Activated T-helper 1 cell treated with anti-CD3 and anti-CD28 coated beads, Interleukin-12 subunit alpha, Interleukin-12 subunit beta, Interleukin-2, Interleukin-4 antibody, amounts not matched to agents 30 ng/mL and 10 ng/mL and 1 ng/mL, durations not matched to agents 14 hours and 24 hours and 36 hours (primary cell): ENCODE measurements at regions of chr13 and their contacts with region 1.

Region 1: GRCh38 chr13:28493740-28494503 is 1.0 kb downstream of the FLT1 start:
- DNase-seq: no peak
- H3K4me3 Mint-ChIP-seq: peak overlapping the region; percentile 85
- H3K27ac Mint-ChIP-seq: no peak overlapping the region
- H3K4me1 Mint-ChIP-seq: peaks cover 49% of the 10 kb centered on the region
- H3K27me3 Mint-ChIP-seq: peaks cover 41% of the 10 kb centered on the region

Region 2: DNA sequence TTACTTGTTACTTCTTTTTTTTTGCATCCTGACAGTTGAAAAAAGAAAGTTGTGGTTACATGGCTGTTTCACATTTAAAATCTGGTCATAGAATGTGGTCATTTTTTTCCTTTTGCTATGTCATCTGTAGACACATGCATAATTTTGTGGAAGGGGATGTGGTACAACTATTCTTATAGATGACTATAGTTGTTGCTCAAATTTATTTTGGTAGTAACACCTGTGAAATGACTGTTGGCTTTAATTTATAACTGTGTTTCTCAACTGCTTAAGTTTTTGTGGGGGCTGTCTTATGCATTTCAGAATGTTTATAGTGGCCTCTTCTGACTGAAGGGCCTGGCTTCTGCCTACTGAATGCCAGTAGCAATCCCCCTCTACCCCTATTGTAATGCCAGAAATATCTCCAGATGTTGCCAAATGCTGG is 225.1 kb before region 1 on chr13:
- intact Hi-C with region 1: loop called (anchors 2 kb)
- DNase-seq: no peak
- H3K4me3 Mint-ChIP-seq: peak overlapping the region; percentile 49
- H3K27ac Mint-ChIP-seq: peak overlapping the region; percentile 70
- H3K4me1 Mint-ChIP-seq: peaks cover 27% of the 10 kb centered on the region
- H3K27me3 Mint-ChIP-seq: no peaks in the 10 kb centered on the region

Region 3: GRCh38 chr13:28394422-28394821 is 99.5 kb before region 1 on chr13:
- intact Hi-C with region 1: no loop called
- DNase-seq: no peak
- H3K4me3 Mint-ChIP-seq: no peak overlapping the region
- H3K27ac Mint-ChIP-seq: no peak overlapping the region
- H3K4me1 Mint-ChIP-seq: peaks cover 11% of the 10 kb centered on the region
- H3K27me3 Mint-ChIP-seq: no peaks in the 10 kb centered on the region

Region 4: GRCh38 chr13:28540612-28541011 is 46.7 kb after region 1 on chr13:
- intact Hi-C with region 1: loop called (anchors 2 kb)
- DNase-seq: no peak
- H3K4me3 Mint-ChIP-seq: no peak overlapping the region
- H3K27ac Mint-ChIP-seq: peak overlapping the region; percentile 84
- H3K4me1 Mint-ChIP-seq: peaks cover 32% of the 10 kb centered on the region
- H3K27me3 Mint-ChIP-seq: no peaks in the 10 kb centered on the region

Region 5: DNA sequence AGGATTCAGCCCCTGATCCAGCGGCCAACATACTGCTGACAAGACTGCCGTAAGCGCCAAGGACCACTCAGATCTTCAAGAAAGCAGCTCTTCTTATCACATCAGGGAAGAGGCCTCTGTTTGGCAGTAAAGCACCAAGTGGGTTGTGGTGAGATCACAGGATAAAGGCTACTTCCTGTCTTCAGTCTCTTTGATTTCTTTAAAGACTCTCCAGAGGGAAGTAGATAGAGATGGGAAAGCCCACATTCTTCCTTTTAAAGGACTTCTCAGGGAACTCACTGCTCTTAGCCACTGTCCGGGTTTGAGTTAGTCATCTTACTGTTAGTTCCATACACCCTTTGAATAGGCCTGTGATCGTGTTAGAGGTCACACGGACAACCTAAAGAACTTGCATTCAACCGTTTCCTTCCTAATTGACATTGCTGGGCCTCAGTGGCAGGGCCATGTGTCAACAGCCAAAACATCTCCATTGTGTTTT is 117.8 kb after region 1 on chr13:
- intact Hi-C with region 1: loop called (anchors 2 kb)
- DNase-seq: peak; percentile 19
- H3K4me3 Mint-ChIP-seq: peak overlapping the region; percentile 46
- H3K27ac Mint-ChIP-seq: peak overlapping the region; percentile 57
- H3K4me1 Mint-ChIP-seq: peaks cover 41% of the 10 kb centered on the region
- H3K27me3 Mint-ChIP-seq: no peaks in the 10 kb centered on the region